ENCODE measurements at regions of chrX and their contacts with region 1.

Region 1: GRCh38 chrX:149221230-149221629 is 283.9 kb downstream of the IDS start:
- DNase-seq: no peak

Region 2: GRCh38 chrX:147803948-147804347 is 1417.3 kb before region 1 on chrX:
- intact Hi-C with region 1: loop called in 1 of 2 experiments (anchors 5 kb)
- DNase-seq: no peak

Region 3: DNA sequence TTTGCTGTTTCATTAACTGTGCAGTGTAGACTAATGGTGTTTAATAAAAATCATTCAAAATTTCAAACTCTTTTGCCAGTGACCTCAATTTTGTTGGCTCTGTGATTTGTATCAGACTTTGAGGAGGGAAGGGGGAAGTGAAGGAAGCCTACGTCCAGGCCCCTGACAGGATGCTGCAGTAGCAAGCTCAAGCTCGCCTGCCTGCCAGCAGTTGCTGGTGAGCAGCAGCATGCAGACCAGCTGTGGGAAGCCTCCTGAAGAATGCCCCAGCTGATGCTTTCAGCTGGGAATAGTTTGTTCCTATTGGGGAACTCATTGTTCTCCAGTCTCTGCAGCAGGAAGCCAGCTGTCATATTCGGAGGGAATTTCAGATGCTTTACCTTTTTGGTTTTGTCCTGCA is 225.6 kb before region 1 on chrX:
- intact Hi-C with region 1: no loop called
- DNase-seq: no peak